Activated CD8-positive, alpha-beta T cell treated with anti-CD3 and anti-CD28 coated beads for 36 hours (primary cell): ENCODE measurements at regions of chr5 and their contacts with region 1.

Region 1: DNA sequence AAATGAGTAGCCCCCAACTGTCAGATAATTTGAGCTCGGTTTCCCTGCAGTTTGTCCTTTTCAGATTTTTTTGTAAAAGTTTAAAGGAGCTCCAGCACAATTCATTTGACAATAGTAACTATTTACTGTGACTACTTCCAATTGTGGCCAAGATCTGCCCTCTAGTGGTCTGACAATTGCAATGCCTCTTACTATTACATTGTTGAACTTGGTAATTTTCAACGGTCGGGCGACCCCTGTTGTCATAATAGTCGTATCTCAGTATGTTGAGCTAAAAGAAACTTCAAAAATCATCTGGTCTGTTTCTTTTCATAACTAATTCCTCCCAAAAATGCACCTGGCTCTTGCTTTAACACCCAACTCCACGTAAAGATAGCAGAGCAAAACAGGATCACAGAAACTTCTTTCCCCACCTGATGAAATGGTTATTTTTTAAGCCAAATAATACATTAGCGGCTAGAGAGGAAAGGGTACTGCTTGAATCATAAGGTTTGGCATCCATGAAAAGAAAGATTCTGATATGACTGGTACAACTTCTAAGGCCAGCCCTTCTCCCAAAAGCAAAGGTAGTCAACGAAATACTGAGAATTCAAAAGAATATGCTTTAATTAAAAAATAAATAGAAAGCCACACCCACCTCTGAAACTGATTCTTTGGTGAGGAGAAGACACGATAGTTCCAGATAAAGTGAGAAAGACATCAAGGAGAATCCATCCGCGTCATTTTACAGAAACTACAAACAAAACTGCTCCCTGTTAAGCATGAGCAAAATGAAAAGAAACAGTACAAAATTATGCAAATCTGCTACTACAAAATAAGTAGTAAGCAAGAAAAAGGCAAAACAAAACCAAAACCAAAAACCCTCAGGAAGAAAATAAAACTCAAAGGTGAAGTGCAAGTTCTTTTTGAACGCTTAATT is 76.9 kb upstream of the HTR4 start:
- DNase-seq: peak; percentile 89
- ATAC-seq: peak; percentile 95
- H3K4me3 Mint-ChIP-seq: peak overlapping the region; percentile 20
- H3K27ac Mint-ChIP-seq: peak overlapping the region; percentile 30
- H3K4me1 Mint-ChIP-seq: peaks cover 2% of the 10 kb centered on the region
- H3K27me3 Mint-ChIP-seq: peaks cover 5% of the 10 kb centered on the region
- CTCF ChIP-seq: peak; percentile 98

Region 2: GRCh38 chr5:148179234-148179824 is 551.9 kb before region 1 on chr5:
- CTCF ChIA-PET with region 1: interaction called, 38 read pairs
- POLR2A ChIA-PET with region 1: no interaction called
- intact Hi-C with region 1: loop called (anchors 5 kb)
- DNase-seq: peak; percentile 4
- ATAC-seq: peak; percentile 67
- H3K4me3 Mint-ChIP-seq: no peak overlapping the region
- H3K27ac Mint-ChIP-seq: no peak overlapping the region
- H3K4me1 Mint-ChIP-seq: no peaks in the 10 kb centered on the region
- H3K27me3 Mint-ChIP-seq: peaks cover 15% of the 10 kb centered on the region
- CTCF ChIP-seq: peak; percentile 72

Region 3: GRCh38 chr5:148443998-148444397 is 287.2 kb before region 1 on chr5:
- CTCF ChIA-PET with region 1: interaction called, 214 read pairs
- POLR2A ChIA-PET with region 1: no interaction called
- intact Hi-C with region 1: loop called (anchors 2 kb)
- DNase-seq: peak; percentile 52
- ATAC-seq: peak; percentile 88
- H3K4me3 Mint-ChIP-seq: no peak overlapping the region
- H3K27ac Mint-ChIP-seq: no peak overlapping the region
- H3K4me1 Mint-ChIP-seq: peaks cover 2% of the 10 kb centered on the region
- H3K27me3 Mint-ChIP-seq: no peaks in the 10 kb centered on the region
- CTCF ChIP-seq: peak; percentile 75

Region 4: GRCh38 chr5:148585988-148586387 is 145.2 kb before region 1 on chr5:
- CTCF ChIA-PET with region 1: interaction called, 13 read pairs
- POLR2A ChIA-PET with region 1: no interaction called
- intact Hi-C with region 1: no loop called
- DNase-seq: no peak
- ATAC-seq: no peak
- H3K4me3 Mint-ChIP-seq: no peak overlapping the region
- H3K27ac Mint-ChIP-seq: no peak overlapping the region
- H3K4me1 Mint-ChIP-seq: no peaks in the 10 kb centered on the region
- H3K27me3 Mint-ChIP-seq: no peaks in the 10 kb centered on the region
- CTCF ChIP-seq: no peak

Region 5: DNA sequence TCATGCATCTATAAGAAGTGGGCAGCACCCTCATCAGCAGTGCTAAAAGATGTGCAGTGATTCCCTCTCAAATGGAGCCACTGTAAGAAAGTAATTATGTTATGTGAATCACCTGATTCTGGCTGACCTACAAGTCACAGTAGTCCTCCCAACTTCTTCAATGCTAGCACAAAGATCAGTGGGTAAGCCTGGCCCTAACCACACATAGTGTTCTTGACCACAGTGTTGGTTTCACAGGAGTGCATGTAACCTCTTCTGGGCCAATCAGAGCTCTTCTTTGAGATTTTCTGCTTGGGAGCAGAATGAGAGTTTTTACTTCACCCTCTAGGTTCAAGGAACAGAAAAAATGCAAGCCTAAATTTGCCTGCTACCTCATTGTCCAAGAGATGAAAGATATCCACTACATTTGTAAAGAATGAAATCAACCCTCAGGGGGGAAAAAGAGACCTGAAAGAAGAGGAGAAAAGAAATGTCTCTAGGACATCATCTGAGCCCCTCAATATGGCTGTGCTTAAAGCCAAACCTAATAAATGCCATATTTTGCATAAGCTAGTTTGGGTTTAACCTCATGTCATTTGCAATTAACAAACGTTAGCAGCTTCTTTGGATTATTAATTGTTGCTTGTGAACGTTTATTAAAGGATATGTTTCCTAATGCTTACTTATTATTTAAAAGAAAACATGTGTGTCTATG is 29.9 kb after region 1 on chr5:
- CTCF ChIA-PET with region 1: interaction called, 11 read pairs
- POLR2A ChIA-PET with region 1: no interaction called
- intact Hi-C with region 1: no loop called
- DNase-seq: peak; percentile 51
- ATAC-seq: peak; percentile 73
- H3K4me3 Mint-ChIP-seq: no peak overlapping the region
- H3K27ac Mint-ChIP-seq: no peak overlapping the region
- H3K4me1 Mint-ChIP-seq: no peaks in the 10 kb centered on the region
- H3K27me3 Mint-ChIP-seq: peaks cover 11% of the 10 kb centered on the region
- CTCF ChIP-seq: no peak

Region 6: GRCh38 chr5:148991606-148992005 is 260.4 kb after region 1 on chr5:
- CTCF ChIA-PET with region 1: interaction called, 296 read pairs
- POLR2A ChIA-PET with region 1: interaction called, 4 read pairs
- intact Hi-C with region 1: no loop called
- DNase-seq: no peak
- ATAC-seq: no peak
- H3K4me3 Mint-ChIP-seq: no peak overlapping the region
- H3K27ac Mint-ChIP-seq: no peak overlapping the region
- H3K4me1 Mint-ChIP-seq: no peaks in the 10 kb centered on the region
- H3K27me3 Mint-ChIP-seq: peaks cover 17% of the 10 kb centered on the region
- CTCF ChIP-seq: no peak

Region 7: GRCh38 chr5:149228618-149229297 is 497.6 kb after region 1 on chr5:
- CTCF ChIA-PET with region 1: no interaction called
- POLR2A ChIA-PET with region 1: no interaction called
- intact Hi-C with region 1: no loop called
- DNase-seq: no peak
- ATAC-seq: no peak
- H3K4me3 Mint-ChIP-seq: no peak overlapping the region
- H3K27ac Mint-ChIP-seq: no peak overlapping the region
- H3K4me1 Mint-ChIP-seq: no peaks in the 10 kb centered on the region
- H3K27me3 Mint-ChIP-seq: peaks cover 5% of the 10 kb centered on the region
- CTCF ChIP-seq: no peak